Endothelial cell of umbilical vein (primary cell): ENCODE measurements at regions of chr1 and their contacts with region 1.

Region 1: DNA sequence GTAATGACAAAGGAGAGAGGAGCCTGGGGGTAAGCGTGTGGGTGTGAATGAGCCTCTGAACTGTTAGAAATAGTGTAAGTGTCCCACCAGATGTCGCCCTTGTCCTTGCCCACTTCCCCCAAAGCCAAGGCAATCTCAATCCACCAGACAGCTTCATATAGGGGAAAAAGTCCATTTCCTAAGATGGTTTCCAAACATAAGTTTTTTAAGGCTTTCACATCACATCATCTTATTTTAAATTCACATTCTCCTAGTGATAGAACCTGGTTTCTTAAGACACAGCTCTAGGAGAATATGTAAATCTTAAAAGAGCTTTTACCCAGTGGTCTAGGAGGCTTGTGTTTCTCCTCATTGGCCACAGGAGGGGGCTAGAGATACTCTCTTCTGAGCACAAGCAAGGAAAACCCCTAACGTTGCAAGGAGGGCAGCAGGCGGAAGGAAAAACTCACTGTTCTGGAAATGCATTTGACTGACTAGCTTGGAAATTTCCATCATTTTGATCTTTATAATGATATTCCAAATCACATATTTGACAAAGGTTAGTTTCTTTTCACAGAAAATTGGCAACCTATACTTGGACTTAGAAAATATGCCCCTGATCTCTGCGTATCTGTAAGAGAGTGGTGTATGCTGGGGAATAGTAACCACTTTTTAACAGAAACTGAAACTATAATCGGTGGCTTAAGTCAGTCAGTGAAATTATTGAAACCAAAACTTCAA is 51.9 kb upstream of the LPAR3 start:
- DNase-seq: peak; percentile 90
- H3K4me3 ChIP-seq: peak overlapping the region; percentile 37 to 72 (median 68)
- H3K27ac ChIP-seq: peak overlapping the region; percentile 20
- H3K4me1 ChIP-seq: peaks cover 5% of the 10 kb centered on the region
- H3K27me3 ChIP-seq: peaks cover 9 to 15% of the 10 kb centered on the region in 2 experiments
- CTCF ChIP-seq: peak; percentile 68 to 83
- POLR2A ChIP-seq: no peak

Region 2: DNA sequence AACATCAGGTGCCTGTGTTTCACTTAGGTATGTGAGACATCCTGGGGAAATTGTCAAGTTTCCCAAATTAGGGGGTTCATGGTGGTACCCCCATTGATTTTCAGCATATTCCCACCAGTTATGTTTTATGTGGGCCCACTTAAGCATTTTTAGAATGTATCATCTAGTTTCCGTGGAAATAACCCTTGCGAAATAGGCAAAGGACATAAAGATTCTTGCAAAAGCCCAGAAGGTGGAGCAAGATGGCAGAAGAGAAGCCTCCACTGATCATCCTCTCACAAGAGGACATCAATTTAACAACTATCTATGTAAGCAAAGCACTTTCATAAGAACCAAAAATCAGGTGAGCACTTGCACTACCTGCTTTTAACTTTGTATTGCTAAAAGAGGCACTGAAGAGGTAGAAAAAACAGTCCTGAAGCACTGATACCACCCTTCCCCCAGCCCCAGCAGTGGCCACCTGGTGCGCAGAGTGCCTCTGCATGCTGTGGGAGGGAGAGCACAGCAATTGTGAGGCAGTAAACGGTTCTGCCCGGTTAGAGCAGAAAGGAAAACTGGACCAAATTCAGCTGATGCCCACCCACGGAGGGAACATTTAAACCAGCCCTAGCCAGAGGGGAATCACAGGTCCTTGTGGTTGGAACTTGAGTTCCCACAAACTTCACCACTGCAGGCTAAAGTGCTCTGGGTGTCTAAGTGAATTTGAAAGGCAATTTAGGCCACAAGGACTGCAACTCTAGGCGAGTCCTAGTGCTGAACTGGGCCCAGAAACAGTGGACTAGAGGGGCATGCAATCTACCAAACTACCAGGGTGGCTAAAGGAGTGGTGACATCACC is 28.8 kb after region 1 on chr1:
- CTCF ChIA-PET with region 1: interaction called, 15 read pairs
- POLR2A ChIA-PET with region 1: no interaction called
- dilution Hi-C with region 1: no loop called
- intact Hi-C with region 1: no loop called
- DNase-seq: no peak
- H3K4me3 ChIP-seq: no peak overlapping the region
- H3K27ac ChIP-seq: no peak overlapping the region
- H3K4me1 ChIP-seq: no peaks in the 10 kb centered on the region
- H3K27me3 ChIP-seq: peaks cover 8 to 20% of the 10 kb centered on the region in 2 experiments
- CTCF ChIP-seq: no peak
- POLR2A ChIP-seq: no peak

Region 3: DNA sequence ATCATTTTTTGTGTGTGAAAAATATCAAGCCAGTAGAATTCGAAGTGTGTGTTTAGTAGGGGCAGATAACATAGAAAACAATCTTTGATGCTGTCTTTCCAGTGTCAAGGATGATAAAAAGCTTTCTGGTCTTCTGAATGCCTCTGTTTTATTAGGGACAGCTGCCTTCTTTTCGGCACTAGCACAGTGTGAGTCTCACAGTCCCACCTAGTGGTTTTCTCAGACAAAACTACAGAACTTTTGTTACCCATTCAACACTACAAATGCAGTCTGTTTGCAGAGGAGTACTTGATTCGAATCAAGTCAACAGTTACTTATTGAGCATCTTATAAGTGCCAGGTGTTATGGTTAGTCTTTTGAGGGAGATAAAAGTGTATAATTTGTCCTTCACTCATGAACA is 134.0 kb after region 1 on chr1:
- CTCF ChIA-PET with region 1: interaction called, 19 read pairs
- POLR2A ChIA-PET with region 1: no interaction called
- dilution Hi-C with region 1: no loop called
- intact Hi-C with region 1: no loop called
- DNase-seq: no peak
- H3K4me3 ChIP-seq: no peak overlapping the region
- H3K27ac ChIP-seq: no peak overlapping the region
- H3K4me1 ChIP-seq: no peaks in the 10 kb centered on the region
- H3K27me3 ChIP-seq: peaks cover 5 to 6% of the 10 kb centered on the region in 2 experiments
- CTCF ChIP-seq: no peak
- POLR2A ChIP-seq: no peak

Region 4: DNA sequence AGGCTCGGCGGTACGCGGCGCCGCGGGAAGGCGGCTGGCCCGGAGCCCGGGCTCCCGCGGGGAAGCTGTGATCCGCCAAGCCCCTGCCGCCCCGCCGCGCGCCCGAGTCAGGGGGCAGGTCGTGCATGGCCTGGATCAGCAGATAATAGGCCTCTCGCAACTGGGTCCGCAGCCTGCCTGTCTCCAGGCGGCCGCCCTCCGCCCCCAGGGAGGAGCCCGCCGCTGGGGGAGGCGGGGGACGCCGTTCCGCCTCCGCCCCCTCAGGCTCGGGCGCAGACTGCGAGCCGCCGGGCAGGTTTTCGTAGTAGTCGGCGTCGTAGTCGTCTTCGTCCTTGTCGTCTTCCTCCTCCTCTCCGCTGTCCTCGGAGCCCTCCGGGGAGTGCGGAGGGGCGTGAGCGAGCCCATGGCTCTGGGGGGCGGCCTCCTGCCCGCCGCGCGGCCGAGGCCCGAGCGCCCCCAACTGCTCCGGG is 256.0 kb after region 1 on chr1 and contains the start of gene SYDE2:
- CTCF ChIA-PET with region 1: interaction called, 8 read pairs
- POLR2A ChIA-PET with region 1: no interaction called
- dilution Hi-C with region 1: no loop called
- intact Hi-C with region 1: loop called (anchors 5 kb)
- DNase-seq: peak; percentile 72
- H3K4me3 ChIP-seq: peak within 1 kb of the TSS; percentile 11 to 66 (median 64)
- H3K27ac ChIP-seq: peak within 1 kb of the TSS; percentile 69
- H3K4me1 ChIP-seq: peaks cover 16% of the 10 kb centered on the region
- H3K27me3 ChIP-seq: peaks cover 0 to 2% of the 10 kb centered on the region in 2 experiments
- CTCF ChIP-seq: no peak
- POLR2A ChIP-seq: peak; percentile 69
- total RNA-seq, gene SYDE2: 2.9 and 3.1 TPM in 2 replicates

Region 5: DNA sequence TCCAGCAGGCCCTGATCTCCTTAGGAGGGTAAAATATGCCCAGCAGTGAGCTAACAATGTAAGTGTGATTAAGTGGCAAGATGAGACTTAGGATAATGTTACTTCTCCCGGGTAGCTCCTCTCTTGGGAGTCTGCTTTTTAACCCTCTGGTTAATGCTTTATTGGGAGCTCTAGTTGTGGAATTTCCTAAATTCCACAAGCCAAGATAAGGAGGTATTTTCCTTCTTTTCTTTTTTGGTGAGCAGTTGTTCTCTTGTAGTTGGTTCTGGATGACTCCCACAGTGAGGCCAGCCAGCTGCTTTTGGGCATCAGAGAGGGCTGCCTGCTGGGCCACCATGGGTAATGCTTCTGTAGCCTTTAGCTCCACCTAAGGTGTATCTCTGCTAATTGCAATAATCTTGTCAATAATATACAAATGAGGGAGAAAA is 295.3 kb after region 1 on chr1:
- CTCF ChIA-PET with region 1: interaction called, 24 read pairs
- POLR2A ChIA-PET with region 1: no interaction called
- dilution Hi-C with region 1: no loop called
- intact Hi-C with region 1: no loop called
- DNase-seq: no peak
- H3K4me3 ChIP-seq: no peak overlapping the region
- H3K27ac ChIP-seq: no peak overlapping the region
- H3K4me1 ChIP-seq: peaks cover 11% of the 10 kb centered on the region
- H3K27me3 ChIP-seq: peaks cover 4 to 7% of the 10 kb centered on the region in 2 experiments
- CTCF ChIP-seq: peak in 1 of 2 donors; percentile 5
- POLR2A ChIP-seq: no peak

Region 6: GRCh38 chr1:85276215-85276977 is 331.5 kb after region 1 on chr1 and contains the start of gene BCL10:
- CTCF ChIA-PET with region 1: interaction called, 12 read pairs
- POLR2A ChIA-PET with region 1: no interaction called
- dilution Hi-C with region 1: no loop called
- intact Hi-C with region 1: no loop called
- DNase-seq: peak; percentile 99
- H3K4me3 ChIP-seq: peak within 1 kb of the TSS; percentile 95 to 99 (median 98)
- H3K27ac ChIP-seq: peak within 1 kb of the TSS; percentile 100
- H3K4me1 ChIP-seq: peaks cover 56% of the 10 kb centered on the region
- H3K27me3 ChIP-seq: no peaks in the 10 kb centered on the region
- CTCF ChIP-seq: no peak
- POLR2A ChIP-seq: peak; percentile 64
- total RNA-seq, gene BCL10: 74.5 and 78.6 TPM in 2 replicates

Region 7: DNA sequence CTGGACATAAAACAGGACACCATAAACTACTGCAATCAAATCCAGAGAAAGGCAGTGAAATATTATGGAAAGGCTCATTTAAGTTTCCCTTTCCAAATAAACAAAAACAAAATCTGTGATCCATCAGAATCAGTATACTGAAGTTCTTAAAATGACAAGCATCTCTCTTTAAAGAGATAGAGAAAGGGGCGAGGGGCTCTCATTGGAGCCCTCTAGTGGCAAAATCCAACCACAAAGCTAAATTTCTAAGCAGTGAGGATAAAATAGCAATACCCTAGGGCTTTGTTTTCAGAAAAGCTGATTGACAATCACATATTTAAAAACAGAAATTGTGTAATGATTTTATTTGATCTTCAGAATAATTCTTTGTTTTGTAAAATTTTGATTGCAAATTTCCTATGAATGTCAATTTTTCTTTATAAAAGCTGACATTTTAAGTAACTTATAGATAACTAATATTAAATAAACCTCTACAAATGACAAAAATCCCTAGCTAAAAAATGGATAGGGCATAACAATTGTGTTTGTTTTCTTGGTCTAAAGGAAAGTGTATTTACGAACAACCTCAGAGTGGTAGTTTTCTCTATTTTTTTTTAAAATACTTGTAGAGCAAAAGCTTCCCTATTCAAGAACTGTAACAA is 1073.5 kb after region 1 on chr1:
- CTCF ChIA-PET with region 1: interaction called, 16 read pairs
- POLR2A ChIA-PET with region 1: no interaction called
- dilution Hi-C with region 1: no loop called
- intact Hi-C with region 1: loop called (anchors 2 kb)
- DNase-seq: peak; percentile 59
- H3K4me3 ChIP-seq: no peak overlapping the region
- H3K27ac ChIP-seq: no peak overlapping the region
- H3K4me1 ChIP-seq: no peaks in the 10 kb centered on the region
- H3K27me3 ChIP-seq: peaks cover 0 to 2% of the 10 kb centered on the region in 2 experiments
- CTCF ChIP-seq: peak; percentile 65 to 70
- POLR2A ChIP-seq: no peak